Activated B cell treated with CpG ODN at 0.5 μM for 24 hours (primary cell): ENCODE measurements at regions of chr9 and their contacts with region 1.

Region 1: DNA sequence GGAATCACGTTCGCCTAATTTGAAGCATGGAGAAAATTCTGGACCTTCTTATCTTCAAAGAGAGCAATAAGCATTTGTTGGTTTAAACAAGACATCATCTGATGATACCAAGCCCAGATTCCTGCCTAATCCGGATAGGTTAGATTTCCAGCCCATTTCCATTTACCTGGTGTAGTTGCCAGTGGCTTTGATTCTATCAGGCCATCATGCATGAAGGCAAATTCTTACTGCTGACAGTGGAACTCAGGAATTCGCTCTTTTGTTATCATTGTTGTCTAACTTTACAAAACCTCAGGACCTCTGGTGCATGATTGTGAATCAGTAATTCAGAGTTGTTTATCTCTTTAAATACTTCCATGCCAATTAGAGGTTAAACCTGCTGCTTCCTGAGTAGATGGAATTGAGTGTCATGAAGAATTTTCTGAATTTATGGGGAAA is 76.5 kb downstream of the C9orf152 start:
- DNase-seq: no peak
- ATAC-seq: no peak
- H3K4me3 Mint-ChIP-seq: peak overlapping the region; percentile 35
- H3K27ac Mint-ChIP-seq: peak overlapping the region; percentile 77
- H3K4me1 Mint-ChIP-seq: peaks cover 95% of the 10 kb centered on the region
- H3K27me3 Mint-ChIP-seq: no peaks in the 10 kb centered on the region
- CTCF ChIP-seq: no peak

Region 2: GRCh38 chr9:110110154-110110553 is 21.3 kb before region 1 on chr9:
- CTCF ChIA-PET with region 1: interaction called, 4 read pairs
- POLR2A ChIA-PET with region 1: interaction called, 10 read pairs
- intact Hi-C with region 1: loop called (anchors 2 kb)
- DNase-seq: no peak
- ATAC-seq: peak; percentile 81
- H3K4me3 Mint-ChIP-seq: peak overlapping the region; percentile 19
- H3K27ac Mint-ChIP-seq: peak overlapping the region; percentile 35
- H3K4me1 Mint-ChIP-seq: peaks cover 85% of the 10 kb centered on the region
- H3K27me3 Mint-ChIP-seq: no peaks in the 10 kb centered on the region
- CTCF ChIP-seq: no peak

Region 3: DNA sequence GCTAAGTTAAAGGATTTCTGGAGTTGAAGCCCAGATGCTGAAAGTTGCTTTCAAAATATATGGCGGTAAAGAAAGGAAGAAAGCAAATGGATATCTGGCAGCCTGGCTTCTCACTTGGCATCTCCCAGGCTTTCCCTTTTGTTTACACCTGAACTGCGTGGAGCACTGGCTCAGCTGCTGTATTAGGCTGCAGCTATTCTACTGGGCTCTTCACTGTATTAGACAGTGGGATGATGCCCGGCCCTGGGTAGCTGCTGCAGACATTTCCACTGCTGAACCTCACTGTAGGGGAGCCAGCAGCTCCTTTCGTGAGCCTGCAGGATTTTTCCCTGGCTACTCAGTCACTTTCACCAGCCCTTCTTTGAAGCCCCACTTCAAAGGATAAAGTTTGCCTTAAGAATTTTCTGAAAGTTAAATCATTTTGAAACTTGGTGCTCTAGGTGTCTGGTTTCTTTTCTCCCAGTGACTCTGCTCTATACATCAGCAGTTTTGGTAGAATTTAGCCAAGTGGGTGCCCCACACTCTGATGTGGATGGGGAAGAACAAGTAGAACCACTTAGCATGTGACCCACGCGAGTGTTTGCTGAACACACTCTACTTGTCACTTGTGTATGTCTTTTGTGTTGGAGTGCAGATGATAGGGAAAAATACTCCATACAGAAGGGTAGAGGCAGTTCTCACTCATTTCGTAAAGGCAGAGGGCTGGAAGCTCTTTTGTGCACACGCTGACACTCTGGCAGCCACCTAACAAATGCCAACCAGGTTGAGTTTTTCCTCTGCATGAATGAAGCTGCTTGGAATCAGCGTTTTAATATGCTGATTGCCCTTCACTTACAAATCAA is 26.6 kb after region 1 on chr9:
- CTCF ChIA-PET with region 1: no interaction called
- POLR2A ChIA-PET with region 1: no interaction called
- intact Hi-C with region 1: no loop called
- DNase-seq: no peak
- ATAC-seq: no peak
- H3K4me3 Mint-ChIP-seq: no peak overlapping the region
- H3K27ac Mint-ChIP-seq: peak overlapping the region; percentile 18
- H3K4me1 Mint-ChIP-seq: peaks cover 95% of the 10 kb centered on the region
- H3K27me3 Mint-ChIP-seq: no peaks in the 10 kb centered on the region
- CTCF ChIP-seq: no peak